ENCODE measurements at regions of chr10 and their contacts with region 1.

Region 1: DNA sequence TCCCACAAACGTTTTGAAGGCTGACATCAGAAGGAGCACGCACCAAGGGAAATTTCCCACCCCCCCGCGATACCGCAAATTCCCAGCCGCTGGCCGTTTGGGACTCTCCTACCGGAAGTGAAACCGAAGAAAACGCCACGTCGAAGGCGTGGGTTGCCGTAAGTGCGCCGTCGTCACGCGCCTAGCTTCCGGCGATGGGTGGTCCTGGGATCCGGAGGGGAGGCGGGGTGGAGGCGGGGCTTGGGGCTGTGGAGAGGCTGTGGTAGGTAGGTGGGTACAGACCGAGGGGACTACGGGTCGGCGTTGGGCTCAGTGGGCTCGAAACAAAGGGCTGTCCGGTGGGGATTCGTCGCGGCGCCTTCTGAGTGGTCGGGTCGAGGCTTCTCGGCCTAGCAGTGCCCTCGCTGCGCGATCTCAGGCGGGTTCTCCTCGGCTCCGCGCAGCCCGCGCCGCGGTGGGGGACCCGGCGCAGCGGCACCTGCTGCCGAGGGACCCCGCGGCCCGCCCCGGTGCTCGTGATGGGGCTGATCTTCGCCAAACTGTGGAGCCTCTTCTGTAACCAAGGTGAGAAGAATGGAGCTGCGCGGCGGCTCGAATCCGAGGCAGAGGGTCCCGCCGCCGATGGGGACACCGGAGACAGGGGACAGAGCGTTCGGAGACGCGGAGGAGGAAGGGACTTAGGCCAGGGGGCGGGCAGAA is at the start of gene ARL5B:
- DNase-seq: peak; percentile 98
- H3K4me3 ChIP-seq: peak within 1 kb of the TSS; percentile 96 to 98 (median 96)
- H3K27ac ChIP-seq: peak within 1 kb of the TSS; percentile 95
- H3K4me1 ChIP-seq: peaks cover 17% of the 10 kb centered on the region
- H3K27me3 ChIP-seq: no peaks in the 10 kb centered on the region
- CTCF ChIP-seq: no peak
- POLR2A ChIP-seq: peak; percentile 89
- total RNA-seq, gene ARL5B: 19.1 and 19.4 TPM in 2 replicates

Region 2: DNA sequence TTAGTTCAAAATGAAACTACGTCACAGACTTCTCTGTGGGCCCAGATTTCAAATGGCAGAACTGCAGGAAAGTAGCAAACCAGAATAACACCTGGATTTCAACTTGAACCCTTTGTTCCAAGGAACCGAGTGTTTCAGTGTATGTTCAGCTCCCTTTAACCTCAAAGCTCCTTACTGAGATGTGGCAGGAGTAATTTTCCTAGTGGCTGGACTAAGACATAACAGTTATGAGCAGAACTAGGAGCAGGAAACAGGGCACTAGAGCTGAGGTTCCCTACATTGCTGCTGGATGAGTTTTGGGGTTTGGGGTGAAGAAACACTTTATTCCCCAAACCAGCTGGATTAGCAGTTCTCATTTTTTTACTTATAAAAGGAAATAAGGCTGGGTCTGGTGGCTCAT is 57.9 kb before region 1 on chr10:
- CTCF ChIA-PET with region 1: no interaction called
- POLR2A ChIA-PET with region 1: interaction called, 10 read pairs
- dilution Hi-C with region 1: no loop called
- intact Hi-C with region 1: no loop called
- DNase-seq: no peak
- H3K4me3 ChIP-seq: no peak overlapping the region
- H3K27ac ChIP-seq: no peak overlapping the region
- H3K4me1 ChIP-seq: no peaks in the 10 kb centered on the region
- H3K27me3 ChIP-seq: no peaks in the 10 kb centered on the region
- CTCF ChIP-seq: no peak
- POLR2A ChIP-seq: no peak

Region 3: DNA sequence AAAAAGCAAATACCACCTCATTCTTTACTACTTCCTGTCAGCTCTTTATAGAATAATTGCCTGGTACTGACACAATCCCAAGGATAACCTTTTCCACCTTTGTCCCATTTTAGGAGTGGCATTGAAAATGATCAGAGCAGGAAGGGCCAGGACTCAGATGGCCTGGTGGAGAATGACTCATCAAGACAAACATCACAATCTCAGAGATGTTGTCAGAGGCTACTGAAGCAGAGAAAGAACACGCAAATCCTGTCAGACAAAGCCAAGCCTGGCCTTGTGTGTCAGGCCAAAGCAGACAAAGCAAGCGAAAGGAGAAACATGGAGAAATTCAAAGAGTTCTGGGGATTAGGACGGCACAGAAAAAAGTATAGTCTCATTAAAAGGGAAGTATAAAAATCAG is 48.8 kb before region 1 on chr10:
- CTCF ChIA-PET with region 1: no interaction called
- POLR2A ChIA-PET with region 1: no interaction called
- dilution Hi-C with region 1: no loop called
- intact Hi-C with region 1: loop called (anchors 1 kb)
- DNase-seq: peak; percentile 84
- H3K4me3 ChIP-seq: no peak overlapping the region
- H3K27ac ChIP-seq: peak overlapping the region; percentile 91
- H3K4me1 ChIP-seq: peaks cover 35% of the 10 kb centered on the region
- H3K27me3 ChIP-seq: no peaks in the 10 kb centered on the region
- CTCF ChIP-seq: no peak
- POLR2A ChIP-seq: no peak

Region 4: DNA sequence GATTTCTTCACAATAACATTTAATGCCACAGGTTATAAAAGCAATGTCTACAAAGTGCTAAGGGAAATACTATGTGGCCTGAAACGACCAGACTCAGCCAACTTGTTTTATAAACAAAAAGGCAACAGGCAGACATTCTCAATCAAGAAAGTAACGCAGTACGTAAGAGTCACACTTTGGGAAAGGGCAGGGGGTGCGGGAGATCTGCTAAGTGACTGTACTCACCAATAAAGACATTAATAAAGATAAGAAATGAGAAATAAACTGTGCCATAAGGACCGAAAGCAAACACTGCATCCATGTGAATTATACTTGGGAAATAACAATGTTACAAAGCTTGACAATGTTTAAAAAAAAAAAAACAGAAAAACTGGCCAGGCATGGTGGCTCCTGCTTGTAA is 33.4 kb before region 1 on chr10:
- CTCF ChIA-PET with region 1: no interaction called
- POLR2A ChIA-PET with region 1: no interaction called
- dilution Hi-C with region 1: no loop called
- intact Hi-C with region 1: loop called (anchors 2 kb)
- DNase-seq: no peak
- H3K4me3 ChIP-seq: no peak overlapping the region
- H3K27ac ChIP-seq: no peak overlapping the region
- H3K4me1 ChIP-seq: peaks cover 4% of the 10 kb centered on the region
- H3K27me3 ChIP-seq: no peaks in the 10 kb centered on the region
- CTCF ChIP-seq: no peak
- POLR2A ChIP-seq: no peak

Measured in endothelial cell of umbilical vein (primary cell).